ENCODE measurements at regions of chr4 and their contacts with region 1.

Region 1: GRCh38 chr4:47463235-47463956 is at the start of gene COMMD8:
- DNase-seq: peak; percentile 99
- ATAC-seq: peak; percentile 95
- H3K4me3 Mint-ChIP-seq: peak within 1 kb of the TSS; percentile 89
- H3K27ac Mint-ChIP-seq: peak within 1 kb of the TSS; percentile 68
- H3K4me1 Mint-ChIP-seq: peaks cover 18% of the 10 kb centered on the region
- H3K27me3 Mint-ChIP-seq: peaks cover 6% of the 10 kb centered on the region; the same call in 1 of the 2 replicates
- CTCF ChIP-seq: no peak
- total RNA-seq, gene COMMD8: 7.1 to 8.1 TPM (median 8.1 TPM) in 3 replicates

Region 2: GRCh38 chr4:47485047-47485692 is 21.8 kb after region 1 on chr4 and contains the start of gene ATP10D:
- CTCF ChIA-PET with region 1: interaction called, 21 read pairs
- POLR2A ChIA-PET with region 1: interaction called, 10 read pairs
- DNase-seq: peak; percentile 95
- ATAC-seq: peak; percentile 100
- H3K4me3 Mint-ChIP-seq: peak within 1 kb of the TSS; percentile 97
- H3K27ac Mint-ChIP-seq: peak within 1 kb of the TSS; percentile 98
- H3K4me1 Mint-ChIP-seq: peaks cover 17% of the 10 kb centered on the region
- H3K27me3 Mint-ChIP-seq: peaks cover 12% of the 10 kb centered on the region
- CTCF ChIP-seq: no peak
- total RNA-seq, gene ATP10D: 3.1 to 4.6 TPM (median 4.6 TPM) in 3 replicates

Region 3: DNA sequence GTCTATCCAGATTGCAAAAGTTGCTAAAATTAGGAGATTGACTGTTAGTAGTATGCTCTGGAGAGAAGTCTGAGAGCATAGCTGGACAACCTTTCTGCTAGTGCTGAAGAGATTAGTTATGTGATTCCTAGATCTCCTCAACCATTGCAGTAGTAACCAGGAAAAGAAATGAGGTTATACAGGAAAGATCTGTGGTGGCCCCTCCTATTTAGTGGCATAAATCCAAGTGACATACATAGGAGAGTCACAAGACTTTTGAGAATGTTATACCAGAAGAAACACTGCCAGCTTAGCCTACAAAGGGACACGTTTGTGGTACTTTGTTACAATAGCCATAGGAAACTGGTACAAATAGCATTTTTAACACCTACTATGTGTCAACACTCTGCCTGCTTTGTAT is 126.9 kb after region 1 on chr4:
- CTCF ChIA-PET with region 1: no interaction called
- POLR2A ChIA-PET with region 1: no interaction called
- DNase-seq: no peak
- ATAC-seq: no peak
- H3K4me3 Mint-ChIP-seq: no peak overlapping the region
- H3K27ac Mint-ChIP-seq: no peak overlapping the region
- H3K4me1 Mint-ChIP-seq: no peaks in the 10 kb centered on the region
- H3K27me3 Mint-ChIP-seq: no peaks in the 10 kb centered on the region
- CTCF ChIP-seq: no peak

Measured in WTC11 (cell line).